Naive thymus-derived CD8-positive, alpha-beta T cell (primary cell): ENCODE measurements at regions of chr6 and their contacts with region 1.

Region 1: DNA sequence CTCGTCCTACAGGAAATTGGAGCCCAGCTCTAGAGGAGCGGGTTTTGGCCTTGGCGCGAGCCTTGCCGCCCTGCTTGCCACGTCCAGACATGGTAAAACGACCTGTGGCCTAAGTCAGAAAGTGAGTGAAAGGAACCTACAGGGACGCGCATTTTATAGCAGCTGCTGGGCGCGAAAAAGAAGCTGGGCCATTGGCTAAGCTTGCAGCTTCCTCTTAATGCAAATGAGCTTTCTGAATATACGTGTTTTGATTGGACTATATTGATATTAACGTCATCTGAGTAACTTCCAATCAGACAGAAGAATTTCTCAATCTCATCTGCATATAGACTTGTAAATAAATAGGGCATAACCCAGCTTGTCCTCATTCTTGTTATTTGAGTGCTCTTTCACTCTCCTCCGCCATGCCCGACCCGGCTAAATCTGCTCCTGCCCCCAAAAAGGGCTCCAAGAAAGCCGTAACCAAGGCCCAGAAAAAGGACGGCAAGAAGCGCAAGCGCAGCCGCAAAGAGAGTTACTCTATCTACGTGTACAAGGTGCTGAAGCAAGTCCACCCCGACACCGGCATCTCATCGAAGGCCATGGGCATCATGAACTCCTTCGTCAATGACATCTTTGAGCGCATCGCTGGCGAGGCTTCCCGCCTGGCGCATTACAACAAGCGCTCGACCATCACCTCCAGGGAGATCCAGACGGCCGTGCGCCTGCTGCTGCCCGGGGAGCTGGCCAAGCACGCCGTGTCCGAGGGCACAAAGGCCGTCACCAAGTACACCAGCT is 18.9 kb downstream of the OR2B2 start:
- DNase-seq: peak; percentile 69 to 96 (median 90)
- ATAC-seq: peak; percentile 72 to 78
- H3K4me3 Mint-ChIP-seq: no peak overlapping the region
- H3K27ac Mint-ChIP-seq: no peak overlapping the region
- H3K4me1 Mint-ChIP-seq: peaks cover 7 to 38% (median 28%) of the 10 kb centered on the region in 4 donors
- H3K27me3 Mint-ChIP-seq: no peaks in the 10 kb centered on the region

Region 2: GRCh38 chr6:27132532-27133280 is 760.5 kb before region 1 on chr6:
- POLR2A ChIA-PET with region 1: interaction called, 46 read pairs
- DNase-seq: peak; percentile 69 to 98 (median 94)
- ATAC-seq: peak; percentile 84
- H3K4me3 Mint-ChIP-seq: no peak overlapping the region
- H3K27ac Mint-ChIP-seq: no peak overlapping the region
- H3K4me1 Mint-ChIP-seq: peaks cover 5 to 20% (median 10%) of the 10 kb centered on the region in 4 donors
- H3K27me3 Mint-ChIP-seq: no peaks in the 10 kb centered on the region

Region 3: GRCh38 chr6:27753668-27754407 is 139.4 kb before region 1 on chr6:
- POLR2A ChIA-PET with region 1: interaction called, 32 read pairs
- DNase-seq: peak; percentile 40 to 76 (median 52)
- ATAC-seq: peak; percentile 17 to 29
- H3K4me3 Mint-ChIP-seq: peak overlapping the region; percentile 90 to 100 (median 96)
- H3K27ac Mint-ChIP-seq: peak overlapping the region; percentile 48 to 100 (median 88)
- H3K4me1 Mint-ChIP-seq: peaks cover 19 to 50% (median 32%) of the 10 kb centered on the region in 4 donors
- H3K27me3 Mint-ChIP-seq: peaks cover 0 to 2% (median 1%) of the 10 kb centered on the region in 5 donors

Region 4: DNA sequence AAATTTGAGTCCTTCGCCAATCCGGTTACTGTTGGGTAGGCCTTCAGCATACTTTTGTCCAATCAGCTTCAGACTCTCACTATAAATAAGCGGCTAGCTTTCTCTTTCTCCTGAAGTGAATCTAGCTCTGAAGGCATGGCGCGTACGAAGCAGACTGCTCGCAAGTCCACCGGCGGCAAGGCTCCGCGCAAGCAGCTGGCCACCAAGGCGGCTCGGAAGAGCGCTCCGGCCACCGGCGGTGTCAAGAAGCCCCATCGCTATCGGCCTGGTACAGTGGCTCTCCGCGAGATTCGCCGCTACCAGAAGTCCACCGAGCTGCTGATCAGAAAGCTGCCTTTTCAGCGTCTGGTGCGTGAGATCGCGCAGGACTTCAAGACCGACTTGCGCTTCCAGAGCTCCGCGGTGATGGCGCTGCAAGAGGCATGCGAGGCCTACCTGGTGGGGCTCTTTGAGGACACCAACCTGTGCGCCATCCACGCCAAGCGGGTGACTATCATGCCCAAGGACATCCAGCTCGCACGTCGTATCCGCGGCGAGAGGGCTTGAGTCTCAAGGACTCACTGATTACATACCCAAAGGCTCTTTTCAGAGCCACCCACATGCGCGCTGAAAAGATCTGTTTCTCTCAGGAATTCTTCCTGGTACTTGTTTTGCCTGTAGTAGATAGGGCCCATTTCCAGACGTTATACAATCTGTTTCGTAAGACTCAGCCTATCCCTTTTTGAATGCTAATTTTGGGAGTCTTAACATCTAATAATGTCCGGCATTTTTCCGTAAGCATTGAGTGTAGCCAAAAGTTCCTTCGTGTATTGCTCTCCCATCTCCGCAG is 83.1 kb before region 1 on chr6:
- POLR2A ChIA-PET with region 1: interaction called, 244 read pairs
- DNase-seq: peak; percentile 58 to 95 (median 84)
- ATAC-seq: peak; percentile 63 to 65
- H3K4me3 Mint-ChIP-seq: peak overlapping the region; percentile 90 to 97 (median 96)
- H3K27ac Mint-ChIP-seq: peak overlapping the region; percentile 97 to 99 (median 98)
- H3K4me1 Mint-ChIP-seq: peaks cover 32 to 72% (median 47%) of the 10 kb centered on the region in 4 donors
- H3K27me3 Mint-ChIP-seq: no peaks in the 10 kb centered on the region

Region 5: GRCh38 chr6:27864906-27865849 is 28.1 kb before region 1 on chr6:
- POLR2A ChIA-PET with region 1: interaction called, 445 read pairs
- DNase-seq: peak; percentile 43 to 91 (median 80)
- ATAC-seq: peak; percentile 81
- H3K4me3 Mint-ChIP-seq: peak overlapping the region; percentile 87 to 99 (median 98)
- H3K27ac Mint-ChIP-seq: peak overlapping the region; percentile 87 to 99 (median 96)
- H3K4me1 Mint-ChIP-seq: peaks cover 15 to 45% (median 39%) of the 10 kb centered on the region in 4 donors
- H3K27me3 Mint-ChIP-seq: no peaks in the 10 kb centered on the region

Region 6: DNA sequence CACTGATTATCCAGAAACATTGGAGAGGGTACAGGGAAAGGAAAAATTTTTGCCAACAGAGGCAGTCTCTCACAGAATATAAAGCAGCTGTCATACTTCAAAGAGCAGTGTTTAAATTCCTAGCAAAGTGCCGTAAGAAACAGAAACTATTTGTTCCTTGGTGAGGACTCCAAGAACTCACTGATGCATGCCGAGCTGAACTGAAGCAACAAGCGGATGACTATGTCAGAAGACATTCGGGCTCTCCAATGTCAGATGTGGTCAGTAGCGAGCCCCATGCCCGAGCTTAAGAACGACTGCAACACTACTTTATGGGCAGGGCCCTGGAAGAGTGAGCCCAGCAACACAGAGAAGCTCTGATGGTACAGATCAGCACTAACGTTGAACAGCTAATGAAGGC is 118.5 kb after region 1 on chr6:
- POLR2A ChIA-PET with region 1: no interaction called
- DNase-seq: no peak
- ATAC-seq: no peak
- H3K4me3 Mint-ChIP-seq: no peak overlapping the region
- H3K27ac Mint-ChIP-seq: peak overlapping the region in 1 of 10 donors; percentile 12
- H3K4me1 Mint-ChIP-seq: peaks cover 5 to 16% (median 8%) of the 10 kb centered on the region in 4 donors
- H3K27me3 Mint-ChIP-seq: peaks cover 19 to 41% (median 31%) of the 10 kb centered on the region in 5 donors